Right cardiac atrium (tissue), 5 donors: ENCODE measurements at regions of chr1 and their contacts with region 1.

Region 1: GRCh38 chr1:46036894-46037839 is 95.3 kb downstream of the PIK3R3 start:
- DNase-seq: peak; percentile 85 to 96 (median 94)
- ATAC-seq: peak; percentile 55 to 64
- H3K4me3 ChIP-seq: no peak overlapping the region
- H3K27ac ChIP-seq: no peak overlapping the region
- H3K4me1 ChIP-seq: peaks cover 16% of the 10 kb centered on the region
- H3K27me3 ChIP-seq: no peaks in the 10 kb centered on the region

Region 2: GRCh38 chr1:46223472-46223943 is 186.3 kb after region 1 on chr1:
- intact Hi-C with region 1: loop called in 1 of 4 experiments (anchors 5 kb)
- DNase-seq: peak; percentile 59 to 79 (median 65)
- ATAC-seq: peak; percentile 88
- H3K4me3 ChIP-seq: no peak overlapping the region
- H3K27ac ChIP-seq: no peak overlapping the region
- H3K4me1 ChIP-seq: no peaks in the 10 kb centered on the region
- H3K27me3 ChIP-seq: no peaks in the 10 kb centered on the region